Mammary epithelial cell (primary cell): ENCODE measurements at regions of chr10 and their contacts with region 1.

Region 1: GRCh38 chr10:30736685-30737232 is 107.2 kb upstream of the LYZL2 start:
- DNase-seq: peak; percentile 92
- H3K4me3 ChIP-seq: no peak overlapping the region
- H3K27ac ChIP-seq: no peak overlapping the region
- H3K4me1 ChIP-seq: no peaks in the 10 kb centered on the region
- H3K27me3 ChIP-seq: no peaks in the 10 kb centered on the region
- CTCF ChIP-seq: no peak

Region 2: GRCh38 chr10:31490858-31491504 is 754.2 kb after region 1 on chr10:
- CTCF ChIA-PET with region 1: no interaction called
- dilution Hi-C with region 1: no loop called
- in situ Hi-C with region 1: loop called in 1 of 2 experiments (anchors 25 kb)
- intact Hi-C with region 1: no loop called
- DNase-seq: peak; percentile 29
- H3K4me3 ChIP-seq: no peak overlapping the region
- H3K27ac ChIP-seq: no peak overlapping the region
- H3K4me1 ChIP-seq: no peaks in the 10 kb centered on the region
- H3K27me3 ChIP-seq: peaks cover 5% of the 10 kb centered on the region
- CTCF ChIP-seq: peak; percentile 72 to 79

Region 3: GRCh38 chr10:31782701-31783100 is 1045.9 kb after region 1 on chr10:
- CTCF ChIA-PET with region 1: no interaction called
- dilution Hi-C with region 1: no loop called
- in situ Hi-C with region 1: loop called in 1 of 2 experiments (anchors 25 kb)
- intact Hi-C with region 1: no loop called
- DNase-seq: no peak
- H3K4me3 ChIP-seq: no peak overlapping the region
- H3K27ac ChIP-seq: no peak overlapping the region
- H3K4me1 ChIP-seq: no peaks in the 10 kb centered on the region
- H3K27me3 ChIP-seq: no peaks in the 10 kb centered on the region
- CTCF ChIP-seq: no peak